Left ventricle myocardium inferior (tissue), 1 donor: ENCODE measurements at regions of chr12 and their contacts with region 1.

Region 1: DNA sequence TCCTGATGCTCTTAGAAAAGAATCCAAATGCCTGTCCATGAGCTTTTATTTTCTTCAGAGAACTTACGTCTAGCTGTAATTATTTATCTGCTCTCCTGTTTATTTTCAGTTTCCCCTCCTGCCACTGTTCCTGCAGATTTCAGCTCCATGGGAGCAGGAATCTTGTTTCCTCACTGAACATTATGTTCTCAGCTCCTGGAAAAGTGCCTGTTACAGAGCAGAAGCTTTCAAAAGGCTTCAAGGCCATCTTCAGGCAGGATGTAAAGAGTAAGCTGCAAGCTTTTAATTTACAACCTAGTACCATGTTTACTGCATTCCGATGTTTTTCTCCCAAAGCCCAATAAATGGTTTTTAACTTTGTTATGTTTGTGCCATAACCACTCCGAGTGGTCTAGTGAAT is 98.4 kb upstream of the BTG1 start:
- DNase-seq: no peak
- H3K4me3 ChIP-seq: peak overlapping the region; percentile 17
- H3K27ac ChIP-seq: peak overlapping the region; percentile 91
- H3K4me1 ChIP-seq: peaks cover 34% of the 10 kb centered on the region
- H3K27me3 ChIP-seq: no peaks in the 10 kb centered on the region
- CTCF ChIP-seq: peak; percentile 42

Region 2: GRCh38 chr12:91804533-91804932 is 439.5 kb before region 1 on chr12:
- intact Hi-C with region 1: loop called (anchors 10 kb)
- DNase-seq: no peak
- H3K4me3 ChIP-seq: no peak overlapping the region
- H3K27ac ChIP-seq: no peak overlapping the region
- H3K4me1 ChIP-seq: no peaks in the 10 kb centered on the region
- H3K27me3 ChIP-seq: no peaks in the 10 kb centered on the region
- CTCF ChIP-seq: no peak